WTC11 (cell line): ENCODE measurements at regions of chr11 and their contacts with region 1.

Region 1: DNA sequence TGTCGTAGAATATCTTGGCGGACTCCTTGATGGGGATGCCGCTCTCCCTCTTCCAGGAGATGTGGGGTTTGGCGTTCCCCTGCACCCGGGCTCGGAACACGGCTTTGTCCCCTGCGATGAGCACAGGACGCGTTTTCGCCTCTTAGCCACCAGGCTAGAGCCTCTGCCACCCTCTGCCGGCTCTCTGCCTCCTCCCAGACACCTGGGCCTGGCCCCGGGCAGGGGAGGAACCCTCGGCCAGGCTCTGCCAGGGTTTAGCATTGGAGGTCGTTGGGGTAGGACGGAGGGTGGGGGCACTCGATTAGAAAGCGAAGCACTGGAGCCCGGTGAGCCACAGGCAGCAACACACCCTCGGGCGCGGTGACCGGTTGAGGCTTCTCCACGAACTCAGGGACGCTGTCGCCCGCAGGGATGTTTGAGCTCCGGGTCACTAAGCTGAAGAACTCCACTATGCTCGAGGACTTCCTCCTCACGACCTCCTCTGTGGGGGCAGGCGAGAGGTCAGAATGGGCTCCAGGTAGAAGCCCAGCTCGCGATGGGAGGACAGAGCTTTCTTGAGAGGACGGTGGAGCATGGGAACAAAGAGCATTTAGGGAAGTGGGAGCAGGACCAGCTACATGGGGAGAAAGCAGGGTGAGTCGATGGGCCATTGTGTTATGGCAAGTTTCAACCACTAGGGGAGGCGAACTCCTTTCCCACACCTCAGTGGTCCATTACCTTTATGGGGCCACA is 4.3 kb downstream of the IGSF22 start:
- DNase-seq: peak; percentile 70
- ATAC-seq: peak; percentile 66
- H3K4me3 Mint-ChIP-seq: peak overlapping the region; percentile 82
- H3K27ac Mint-ChIP-seq: no peak overlapping the region
- H3K4me1 Mint-ChIP-seq: peaks cover 15% of the 10 kb centered on the region
- H3K27me3 Mint-ChIP-seq: peaks cover 46% of the 10 kb centered on the region
- CTCF ChIP-seq: peak; percentile 85

Region 2: GRCh38 chr11:18698341-18699268 is 23.1 kb before region 1 on chr11 and contains the start of gene TMEM86A:
- CTCF ChIA-PET with region 1: interaction called, 13 read pairs
- POLR2A ChIA-PET with region 1: no interaction called
- DNase-seq: peak; percentile 94
- ATAC-seq: peak; percentile 93
- H3K4me3 Mint-ChIP-seq: peak within 1 kb of the TSS; percentile 71
- H3K27ac Mint-ChIP-seq: no peak within 1 kb of the TSS
- H3K4me1 Mint-ChIP-seq: peaks cover 8% of the 10 kb centered on the region
- H3K27me3 Mint-ChIP-seq: peaks cover 67% of the 10 kb centered on the region
- CTCF ChIP-seq: no peak
- total RNA-seq, gene TMEM86A: 1.3 to 1.7 TPM (median 1.6 TPM) in 3 replicates

Region 3: GRCh38 chr11:18706330-18707243 is 15.1 kb before region 1 on chr11:
- CTCF ChIA-PET with region 1: interaction called, 42 read pairs
- POLR2A ChIA-PET with region 1: interaction called, 8 read pairs
- DNase-seq: peak; percentile 69
- ATAC-seq: peak; percentile 81
- H3K4me3 Mint-ChIP-seq: peak overlapping the region; percentile 79
- H3K27ac Mint-ChIP-seq: no peak overlapping the region
- H3K4me1 Mint-ChIP-seq: peaks cover 13% of the 10 kb centered on the region
- H3K27me3 Mint-ChIP-seq: peaks cover 67% of the 10 kb centered on the region
- CTCF ChIP-seq: no peak

Region 4: DNA sequence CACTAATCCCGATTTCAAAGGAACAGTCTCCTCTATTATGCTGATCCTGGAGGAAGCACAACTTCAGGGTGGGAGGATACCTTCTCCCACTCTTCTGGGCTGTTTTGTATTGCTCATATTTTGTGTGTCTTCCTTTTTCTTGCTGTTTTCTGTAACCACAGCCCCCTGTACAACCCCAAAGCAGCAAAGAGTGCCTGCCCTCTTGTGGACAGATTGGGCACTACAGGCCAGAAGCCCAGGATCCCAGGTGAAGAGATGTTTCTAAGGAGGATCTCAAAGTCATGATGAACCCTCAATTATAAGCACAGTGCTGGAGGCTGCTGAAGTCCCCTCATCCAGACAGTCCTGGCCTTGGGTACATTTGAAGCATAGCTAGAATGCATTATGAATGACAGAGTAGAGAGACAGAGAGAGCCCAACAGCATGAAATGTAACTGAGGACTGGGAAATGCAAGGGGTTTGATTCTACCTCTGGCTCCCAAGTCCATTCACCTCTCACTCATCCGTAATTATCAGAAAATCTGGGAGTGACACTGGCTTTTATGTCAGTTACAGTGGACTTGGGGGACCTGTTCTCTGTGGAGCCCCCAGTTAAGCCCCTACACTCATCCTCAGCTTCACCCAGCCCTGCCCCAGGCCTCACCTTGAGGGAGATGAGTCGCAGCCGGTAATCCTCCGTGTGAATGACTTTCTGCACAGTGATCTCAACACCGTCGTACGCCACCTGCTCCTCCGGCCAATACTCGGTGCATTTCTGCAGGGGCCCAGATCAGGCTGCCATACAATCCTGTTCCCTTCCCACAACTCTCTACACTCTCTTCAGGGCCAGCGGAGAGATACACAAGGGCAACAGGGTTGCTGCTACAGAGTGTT is 10.5 kb after region 1 on chr11:
- CTCF ChIA-PET with region 1: interaction called, 28 read pairs
- POLR2A ChIA-PET with region 1: no interaction called
- DNase-seq: peak; percentile 77
- ATAC-seq: peak; percentile 46
- H3K4me3 Mint-ChIP-seq: no peak overlapping the region
- H3K27ac Mint-ChIP-seq: no peak overlapping the region
- H3K4me1 Mint-ChIP-seq: peaks cover 11% of the 10 kb centered on the region
- H3K27me3 Mint-ChIP-seq: no peaks in the 10 kb centered on the region
- CTCF ChIP-seq: peak; percentile 98

Region 5: GRCh38 chr11:18741783-18742182 is 20.1 kb after region 1 on chr11:
- CTCF ChIA-PET with region 1: interaction called, 14 read pairs
- POLR2A ChIA-PET with region 1: no interaction called
- DNase-seq: no peak
- ATAC-seq: no peak
- H3K4me3 Mint-ChIP-seq: no peak overlapping the region
- H3K27ac Mint-ChIP-seq: no peak overlapping the region
- H3K4me1 Mint-ChIP-seq: no peaks in the 10 kb centered on the region
- H3K27me3 Mint-ChIP-seq: no peaks in the 10 kb centered on the region
- CTCF ChIP-seq: no peak

Region 6: DNA sequence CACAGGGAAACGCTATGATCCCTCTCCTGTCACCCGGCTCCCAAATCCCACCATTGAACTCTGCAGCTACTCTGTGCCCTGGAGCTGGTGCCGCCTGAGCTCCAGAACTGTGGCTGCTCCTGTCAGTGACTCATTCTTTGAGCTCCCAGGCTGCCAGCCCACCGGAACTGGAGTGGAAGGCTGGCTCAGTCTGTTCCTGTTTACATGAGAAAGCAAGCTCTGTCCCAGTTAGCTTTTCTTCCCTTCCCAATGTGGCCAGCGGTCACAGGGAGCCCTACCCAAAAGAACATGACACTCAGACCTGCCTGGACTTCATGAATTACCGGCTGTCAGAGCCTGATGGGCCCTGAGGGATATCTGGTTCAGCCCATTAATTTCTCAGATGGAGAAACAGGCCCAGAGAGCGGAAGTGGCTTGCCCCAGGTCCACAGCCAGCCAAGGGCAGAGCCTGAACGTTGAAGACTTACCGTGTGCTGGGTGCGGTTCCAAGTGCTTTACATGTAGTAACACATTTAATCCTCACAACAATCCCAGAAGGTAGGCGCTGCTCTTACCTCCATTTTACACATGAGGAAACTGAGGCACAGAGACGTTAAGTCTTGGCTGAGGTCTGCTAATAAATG is 28.1 kb after region 1 on chr11:
- CTCF ChIA-PET with region 1: interaction called, 15 read pairs
- POLR2A ChIA-PET with region 1: no interaction called
- DNase-seq: peak; percentile 30
- ATAC-seq: peak; percentile 85
- H3K4me3 Mint-ChIP-seq: no peak overlapping the region
- H3K27ac Mint-ChIP-seq: no peak overlapping the region; the same call in 1 of the 2 replicates
- H3K4me1 Mint-ChIP-seq: peaks cover 16% of the 10 kb centered on the region
- H3K27me3 Mint-ChIP-seq: no peaks in the 10 kb centered on the region
- CTCF ChIP-seq: no peak

Region 7: GRCh38 chr11:18775492-18776292 is 54.0 kb after region 1 on chr11:
- CTCF ChIA-PET with region 1: interaction called, 18 read pairs
- POLR2A ChIA-PET with region 1: no interaction called
- DNase-seq: peak; percentile 93
- ATAC-seq: peak; percentile 86
- H3K4me3 Mint-ChIP-seq: no peak overlapping the region
- H3K27ac Mint-ChIP-seq: no peak overlapping the region
- H3K4me1 Mint-ChIP-seq: peaks cover 41% of the 10 kb centered on the region
- H3K27me3 Mint-ChIP-seq: peaks cover under 1% of the 10 kb centered on the region
- CTCF ChIP-seq: peak; percentile 85